Activated CD4-positive, alpha-beta T cell treated with anti-CD3 and anti-CD28 coated beads for 36 hours (primary cell): ENCODE measurements at regions of chr4 and their contacts with region 1.

Region 1: GRCh38 chr4:16916719-16917337 is 18.4 kb upstream of the LDB2 start:
- DNase-seq: peak; percentile 88
- ATAC-seq: peak; percentile 97
- H3K4me3 Mint-ChIP-seq: no peak overlapping the region
- H3K27ac Mint-ChIP-seq: no peak overlapping the region
- H3K4me1 Mint-ChIP-seq: no peaks in the 10 kb centered on the region
- H3K27me3 Mint-ChIP-seq: no peaks in the 10 kb centered on the region

Region 2: GRCh38 chr4:16289897-16290554 is 626.8 kb before region 1 on chr4:
- CTCF ChIA-PET with region 1: no interaction called
- POLR2A ChIA-PET with region 1: no interaction called
- intact Hi-C with region 1: loop called in 1 of 2 experiments (anchors 2 kb)
- DNase-seq: no peak
- ATAC-seq: no peak
- H3K4me3 Mint-ChIP-seq: no peak overlapping the region
- H3K27ac Mint-ChIP-seq: no peak overlapping the region
- H3K4me1 Mint-ChIP-seq: peaks cover 4% of the 10 kb centered on the region
- H3K27me3 Mint-ChIP-seq: peaks cover 9% of the 10 kb centered on the region

Region 3: DNA sequence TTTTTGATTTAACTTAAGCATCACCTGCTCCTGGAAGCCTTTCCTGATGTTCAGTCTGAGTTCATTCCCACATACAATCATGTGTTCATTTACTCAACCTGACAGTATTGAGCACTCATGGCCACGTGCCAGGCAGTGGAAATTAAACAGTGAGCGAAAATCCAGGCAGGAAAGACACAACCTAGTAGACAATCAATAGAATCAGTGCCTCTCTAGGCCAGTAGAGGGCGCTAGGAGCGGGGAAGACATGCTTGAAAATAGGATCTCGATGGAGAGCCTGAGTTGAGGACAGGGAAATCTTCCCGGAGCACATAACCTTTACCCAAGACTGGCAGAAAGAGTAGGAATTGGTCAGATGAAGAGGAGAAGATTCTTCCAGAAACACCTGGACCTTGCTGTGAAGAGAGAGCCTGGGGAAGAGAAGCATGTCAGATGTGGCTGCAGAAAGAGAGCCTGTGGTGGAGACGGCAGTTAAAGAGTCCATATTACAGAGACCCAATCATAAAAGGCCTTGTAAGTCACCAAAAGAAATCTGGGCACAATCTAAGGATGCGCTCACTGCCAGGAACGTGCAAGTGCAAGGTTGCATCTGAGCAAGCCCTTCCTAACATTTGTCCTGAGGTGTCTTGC is 121.9 kb before region 1 on chr4:
- CTCF ChIA-PET with region 1: interaction called, 9 read pairs
- POLR2A ChIA-PET with region 1: no interaction called
- intact Hi-C with region 1: loop called (anchors 1 to 10 kb)
- DNase-seq: peak; percentile 69
- ATAC-seq: peak; percentile 33
- H3K4me3 Mint-ChIP-seq: no peak overlapping the region
- H3K27ac Mint-ChIP-seq: no peak overlapping the region
- H3K4me1 Mint-ChIP-seq: no peaks in the 10 kb centered on the region
- H3K27me3 Mint-ChIP-seq: no peaks in the 10 kb centered on the region

Region 4: GRCh38 chr4:16858275-16858752 is 58.5 kb before region 1 on chr4:
- CTCF ChIA-PET with region 1: no interaction called
- POLR2A ChIA-PET with region 1: no interaction called
- intact Hi-C with region 1: no loop called
- DNase-seq: no peak
- ATAC-seq: no peak
- H3K4me3 Mint-ChIP-seq: no peak overlapping the region
- H3K27ac Mint-ChIP-seq: no peak overlapping the region
- H3K4me1 Mint-ChIP-seq: no peaks in the 10 kb centered on the region
- H3K27me3 Mint-ChIP-seq: peaks cover 2% of the 10 kb centered on the region

Region 5: GRCh38 chr4:16893141-16893651 is 23.6 kb before region 1 on chr4:
- CTCF ChIA-PET with region 1: interaction called, 6 read pairs
- POLR2A ChIA-PET with region 1: no interaction called
- intact Hi-C with region 1: loop called in 1 of 2 experiments (anchors 1 kb)
- DNase-seq: peak; percentile 57
- ATAC-seq: peak; percentile 58
- H3K4me3 Mint-ChIP-seq: no peak overlapping the region
- H3K27ac Mint-ChIP-seq: peak overlapping the region; percentile 21
- H3K4me1 Mint-ChIP-seq: peaks cover 36% of the 10 kb centered on the region
- H3K27me3 Mint-ChIP-seq: peaks cover 6% of the 10 kb centered on the region

Region 6: GRCh38 chr4:17082186-17082585 is 165.4 kb after region 1 on chr4:
- CTCF ChIA-PET with region 1: no interaction called
- POLR2A ChIA-PET with region 1: no interaction called
- intact Hi-C with region 1: no loop called
- DNase-seq: no peak
- ATAC-seq: no peak
- H3K4me3 Mint-ChIP-seq: no peak overlapping the region
- H3K27ac Mint-ChIP-seq: no peak overlapping the region
- H3K4me1 Mint-ChIP-seq: no peaks in the 10 kb centered on the region
- H3K27me3 Mint-ChIP-seq: peaks cover 6% of the 10 kb centered on the region

Region 7: DNA sequence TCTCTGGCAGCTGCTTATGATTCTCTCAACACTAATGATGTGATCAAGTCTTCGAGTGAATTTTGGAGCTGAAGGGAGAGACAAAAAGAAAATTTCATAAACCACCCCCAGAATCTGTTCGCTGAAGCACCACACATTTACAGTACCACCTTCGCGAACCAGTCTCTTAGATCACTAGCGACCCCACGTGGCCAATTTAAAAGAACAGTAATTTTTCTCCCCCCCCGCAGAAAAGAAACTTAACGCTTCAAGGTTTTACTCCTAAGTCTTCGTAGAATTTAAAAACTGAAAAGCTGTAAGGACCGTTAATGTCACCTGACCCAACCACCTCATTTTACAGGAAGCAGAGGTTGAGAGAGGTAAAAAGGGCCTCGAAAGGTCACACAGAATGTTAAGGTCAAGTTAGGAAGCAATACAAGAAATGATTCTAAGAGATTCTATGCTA is 407.6 kb after region 1 on chr4:
- CTCF ChIA-PET with region 1: interaction called, 11 read pairs
- POLR2A ChIA-PET with region 1: no interaction called
- intact Hi-C with region 1: loop called (anchors 1 to 5 kb)
- DNase-seq: peak; percentile 75
- ATAC-seq: peak; percentile 84
- H3K4me3 Mint-ChIP-seq: no peak overlapping the region
- H3K27ac Mint-ChIP-seq: peak overlapping the region; percentile 32
- H3K4me1 Mint-ChIP-seq: peaks cover 14% of the 10 kb centered on the region
- H3K27me3 Mint-ChIP-seq: no peaks in the 10 kb centered on the region